AG04450 (cell line): ENCODE measurements at regions of chr1 and their contacts with region 1.

Region 1: GRCh38 chr1:115012006-115012405 is 17.6 kb upstream of the TSHB start:
- DNase-seq: no peak
- H3K4me3 ChIP-seq: no peak overlapping the region
- H3K27ac ChIP-seq: no peak overlapping the region
- H3K27me3 ChIP-seq: no peaks in the 10 kb centered on the region
- CTCF ChIP-seq: no peak

Region 2: DNA sequence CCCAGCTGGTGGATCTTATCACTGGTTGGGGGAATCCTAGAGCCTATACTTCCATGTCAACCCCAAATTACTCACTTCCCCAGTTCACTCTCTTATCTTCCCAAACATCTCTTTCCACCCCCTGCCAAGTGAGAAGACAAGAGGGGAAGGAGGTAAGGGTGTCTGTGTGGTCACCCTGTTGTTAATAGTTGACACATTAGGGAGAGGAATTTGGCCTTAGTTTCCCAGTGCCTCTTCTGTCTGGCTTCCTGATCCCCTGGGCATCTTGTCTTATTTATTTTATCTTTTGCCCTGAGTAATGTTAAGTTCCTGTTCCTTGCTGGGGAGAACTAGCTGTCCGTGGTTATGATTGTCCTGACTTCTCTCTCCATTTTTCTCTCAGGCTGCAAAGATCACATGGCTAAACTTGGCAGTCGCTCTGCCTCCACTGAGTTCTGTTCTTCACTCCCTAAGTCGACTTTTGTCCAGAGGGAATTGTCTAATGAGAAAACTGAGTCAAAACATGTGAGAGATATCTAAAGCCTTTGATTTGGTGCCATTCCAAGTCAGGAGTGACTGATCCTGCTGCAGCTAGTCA is 701.2 kb before region 1 on chr1:
- CTCF ChIA-PET with region 1: no interaction called
- POLR2A ChIA-PET with region 1: no interaction called
- DNase-seq: no peak
- H3K4me3 ChIP-seq: no peak overlapping the region
- H3K27ac ChIP-seq: no peak overlapping the region
- H3K27me3 ChIP-seq: no peaks in the 10 kb centered on the region
- CTCF ChIP-seq: no peak

Region 3: GRCh38 chr1:114495486-114495885 is 516.5 kb before region 1 on chr1:
- CTCF ChIA-PET with region 1: no interaction called
- POLR2A ChIA-PET with region 1: interaction called, 11 read pairs
- DNase-seq: no peak
- H3K4me3 ChIP-seq: no peak overlapping the region
- H3K27ac ChIP-seq: no peak overlapping the region
- H3K27me3 ChIP-seq: no peaks in the 10 kb centered on the region
- CTCF ChIP-seq: no peak